Heart left ventricle (tissue), 16 donors: ENCODE measurements at regions of chr7 and their contacts with region 1.

Region 1: GRCh38 chr7:95527033-95527775 is 41.5 kb downstream of the ASB4 start:
- DNase-seq: peak in 4 of 5 donors; percentile 50 to 53 (median 51)
- ATAC-seq: peak; percentile 77 to 86 (median 84)
- H3K4me3 ChIP-seq: no peak overlapping the region
- H3K27ac ChIP-seq: no peak overlapping the region
- H3K4me1 ChIP-seq: peaks cover 0 to 19% (median 0%) of the 10 kb centered on the region in 12 donors
- H3K27me3 ChIP-seq: no peaks in the 10 kb centered on the region
- CTCF ChIP-seq: peak; percentile 82 to 96 (median 90)
- POLR2A ChIP-seq: no peak

Region 2: GRCh38 chr7:95511716-95512260 is 15.4 kb before region 1 on chr7:
- intact Hi-C with region 1: loop called in 1 of 10 experiments (anchors 2 kb)
- DNase-seq: peak in 4 of 5 donors; percentile 50 to 59 (median 55)
- ATAC-seq: peak; percentile 75 to 93 (median 84)
- H3K4me3 ChIP-seq: peak overlapping the region in 2 of 12 donors; percentile 12 to 20
- H3K27ac ChIP-seq: no peak overlapping the region
- H3K4me1 ChIP-seq: peaks cover 0 to 3% (median 0%) of the 10 kb centered on the region in 12 donors
- H3K27me3 ChIP-seq: peaks cover 0 to 6% (median 0%) of the 10 kb centered on the region in 9 donors
- CTCF ChIP-seq: peak; percentile 85 to 95 (median 92)
- POLR2A ChIP-seq: no peak

Region 3: DNA sequence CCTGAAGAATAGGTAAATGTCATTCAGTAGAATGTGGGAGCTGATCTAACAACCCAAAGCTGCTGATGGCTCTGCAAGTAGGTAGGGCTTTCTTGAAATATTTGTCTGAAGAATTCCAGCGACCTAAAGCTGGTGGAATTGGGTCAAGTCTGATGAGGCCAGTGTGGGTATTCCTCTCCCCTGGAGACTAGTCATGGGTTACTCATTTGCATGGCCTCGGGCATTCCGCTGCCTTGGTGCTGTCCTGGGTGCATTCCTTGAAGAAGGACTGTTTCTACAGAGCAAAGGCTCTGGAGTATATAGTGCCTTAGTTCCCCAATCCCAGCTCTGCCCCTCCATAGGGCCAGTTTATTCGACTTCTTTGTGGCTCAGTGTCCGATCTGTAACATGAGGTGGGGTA is 49.9 kb after region 1 on chr7:
- intact Hi-C with region 1: loop called in 1 of 10 experiments (anchors 5 kb)
- DNase-seq: no peak
- ATAC-seq: no peak
- H3K4me3 ChIP-seq: no peak overlapping the region
- H3K27ac ChIP-seq: no peak overlapping the region
- H3K4me1 ChIP-seq: no peaks in the 10 kb centered on the region
- H3K27me3 ChIP-seq: no peaks in the 10 kb centered on the region
- CTCF ChIP-seq: no peak
- POLR2A ChIP-seq: no peak

Region 4: DNA sequence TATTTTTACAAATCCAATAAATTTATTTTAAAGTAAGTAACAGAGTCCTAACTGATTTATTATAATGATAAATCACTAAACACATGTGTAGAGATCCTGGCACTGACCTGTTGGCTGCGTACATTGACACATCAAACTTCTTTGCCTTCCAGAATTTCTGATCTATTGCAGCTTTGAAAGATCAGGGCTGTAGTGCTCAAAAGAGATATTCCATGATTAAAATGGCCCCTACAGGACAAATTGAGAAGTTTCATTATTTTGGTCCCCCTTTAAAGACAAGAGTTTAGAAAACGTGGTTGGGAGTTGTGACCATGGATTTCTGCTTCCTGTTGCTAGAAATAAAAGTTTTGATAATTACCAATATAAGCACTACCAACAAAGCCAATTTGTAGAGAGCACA is 156.8 kb after region 1 on chr7:
- intact Hi-C with region 1: loop called (anchors 1 to 5 kb)
- DNase-seq: no peak
- ATAC-seq: peak; percentile 23 to 72 (median 36)
- H3K4me3 ChIP-seq: peak overlapping the region in 1 of 12 donors; percentile 22
- H3K27ac ChIP-seq: peak overlapping the region in 1 of 12 donors; percentile 62
- H3K4me1 ChIP-seq: peaks cover 0 to 12% (median 0%) of the 10 kb centered on the region in 12 donors
- H3K27me3 ChIP-seq: no peaks in the 10 kb centered on the region
- CTCF ChIP-seq: peak; percentile 45 to 77 (median 60)
- POLR2A ChIP-seq: no peak

Region 5: DNA sequence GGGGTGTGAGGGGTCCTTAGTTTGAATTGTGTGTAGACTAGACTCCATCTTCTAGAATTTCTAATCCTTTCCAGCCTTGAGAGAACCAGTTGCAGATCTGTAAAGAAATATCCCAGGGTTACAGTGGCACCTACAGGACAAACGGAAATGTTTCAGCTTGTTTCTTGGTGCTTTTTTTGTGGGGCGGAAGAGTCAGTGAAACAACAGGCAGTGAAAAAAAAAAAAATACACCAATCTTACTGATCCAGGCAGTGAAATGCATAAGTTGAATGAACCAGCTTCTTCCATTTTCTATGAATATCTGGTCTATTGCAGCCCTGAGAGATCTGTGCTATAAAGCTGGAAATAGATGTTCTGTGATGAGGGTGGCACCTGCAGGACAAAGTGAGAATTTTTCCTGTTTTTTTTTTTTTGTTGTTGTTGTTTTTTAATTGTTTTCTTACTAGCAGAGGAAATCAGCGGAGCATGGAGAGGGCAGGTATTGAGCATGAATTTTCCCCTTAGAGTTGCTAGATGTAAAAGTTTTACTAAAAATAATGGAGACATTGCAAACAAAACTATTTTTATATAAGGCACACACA is 163.3 kb after region 1 on chr7:
- intact Hi-C with region 1: loop called in 9 of 10 experiments (anchors 1 to 5 kb)
- DNase-seq: peak in 2 of 5 donors; percentile 11 to 18
- ATAC-seq: peak; percentile 26 to 64 (median 56)
- H3K4me3 ChIP-seq: peak overlapping the region in 2 of 12 donors; percentile 11 to 42
- H3K27ac ChIP-seq: no peak overlapping the region
- H3K4me1 ChIP-seq: peaks cover 0 to 7% (median 0%) of the 10 kb centered on the region in 12 donors
- H3K27me3 ChIP-seq: no peaks in the 10 kb centered on the region
- CTCF ChIP-seq: peak; percentile 39 to 76 (median 64)
- POLR2A ChIP-seq: no peak

Region 6: GRCh38 chr7:95865716-95866371 is 338.6 kb after region 1 on chr7:
- intact Hi-C with region 1: loop called in 2 of 10 experiments (anchors 10 kb)
- DNase-seq: no peak
- ATAC-seq: no peak
- H3K4me3 ChIP-seq: no peak overlapping the region
- H3K27ac ChIP-seq: no peak overlapping the region
- H3K4me1 ChIP-seq: no peaks in the 10 kb centered on the region
- H3K27me3 ChIP-seq: no peaks in the 10 kb centered on the region
- CTCF ChIP-seq: peak in 3 of 12 donors; percentile 12 to 22 (median 14)
- POLR2A ChIP-seq: no peak

Region 7: GRCh38 chr7:95871078-95871782 is 344.0 kb after region 1 on chr7:
- intact Hi-C with region 1: loop called in 2 of 10 experiments (anchors 10 kb)
- DNase-seq: peak in 1 of 5 donors; percentile 20
- ATAC-seq: peak in 3 of 4 donors; percentile 51 to 71 (median 69)
- H3K4me3 ChIP-seq: no peak overlapping the region
- H3K27ac ChIP-seq: no peak overlapping the region
- H3K4me1 ChIP-seq: peaks cover 0 to 14% (median 7%) of the 10 kb centered on the region in 12 donors
- H3K27me3 ChIP-seq: no peaks in the 10 kb centered on the region
- CTCF ChIP-seq: peak; percentile 36 to 73 (median 62)
- POLR2A ChIP-seq: no peak